ENCODE measurements at regions of chr3 and their contacts with region 1.

Region 1: DNA sequence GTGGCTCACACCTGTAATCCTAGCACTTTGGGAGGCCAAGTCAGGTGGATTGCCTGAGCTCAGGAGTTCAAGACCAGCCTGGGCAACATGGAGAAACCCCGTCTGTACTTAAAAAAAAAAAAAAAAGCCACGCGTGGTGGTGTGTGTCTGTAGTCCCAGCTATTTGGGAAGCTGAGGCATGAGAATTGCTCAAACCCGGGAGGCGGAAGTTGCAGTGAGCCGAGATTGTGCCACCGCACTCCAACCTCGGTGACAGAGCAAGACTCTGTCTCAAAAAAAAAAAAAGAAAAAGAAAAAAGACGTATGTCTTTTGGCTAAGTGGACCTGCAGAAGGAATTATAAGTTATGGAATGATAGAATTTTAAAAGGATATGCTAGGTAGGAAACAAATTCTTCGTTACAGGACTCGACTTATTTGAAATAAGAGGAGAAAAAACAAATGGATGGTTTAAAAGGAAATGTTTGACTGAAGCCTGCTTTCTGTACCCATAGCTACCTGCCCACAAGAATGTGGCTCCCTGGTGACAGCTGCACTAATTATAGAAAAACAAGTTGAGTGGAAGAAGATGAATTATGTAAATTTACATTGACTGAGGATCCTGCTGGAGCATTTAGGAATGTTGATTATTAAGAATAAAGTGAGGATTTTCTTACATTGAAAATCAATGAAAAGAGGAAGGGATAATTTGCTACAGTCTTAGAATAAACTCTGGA is 36.0 kb upstream of the SKIL start:
- DNase-seq: peak; percentile 63 to 84
- H3K4me3 ChIP-seq: no peak overlapping the region
- H3K27ac ChIP-seq: peak overlapping the region; percentile 52
- H3K4me1 ChIP-seq: peaks cover 35% of the 10 kb centered on the region
- H3K27me3 ChIP-seq: no peaks in the 10 kb centered on the region
- CTCF ChIP-seq: no peak

Region 2: GRCh38 chr3:170012683-170013384 is 308.6 kb before region 1 on chr3:
- CTCF ChIA-PET with region 1: no interaction called
- POLR2A ChIA-PET with region 1: no interaction called
- intact Hi-C with region 1: no loop called
- DNase-seq: no peak
- H3K4me3 ChIP-seq: no peak overlapping the region
- H3K27ac ChIP-seq: no peak overlapping the region
- H3K4me1 ChIP-seq: no peaks in the 10 kb centered on the region
- H3K27me3 ChIP-seq: no peaks in the 10 kb centered on the region
- CTCF ChIP-seq: no peak

Region 3: DNA sequence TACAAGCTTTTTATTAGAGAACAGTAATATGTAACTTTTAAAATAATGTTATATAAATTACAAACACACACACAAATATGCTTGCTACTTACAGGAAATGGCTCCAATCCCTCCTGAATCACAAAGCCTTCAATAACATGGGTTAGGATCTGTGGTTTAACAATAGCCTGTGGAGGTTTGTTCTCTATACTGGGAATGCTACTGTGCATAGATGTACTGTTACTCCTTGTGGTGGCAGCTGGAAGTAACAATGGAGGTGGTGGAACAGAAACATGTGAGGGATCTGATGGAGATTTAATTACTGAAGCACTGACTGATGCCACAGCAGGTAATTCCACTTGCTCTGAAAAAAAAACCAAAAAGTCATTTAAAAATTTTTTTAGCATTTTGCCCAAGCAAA is 204.3 kb before region 1 on chr3:
- CTCF ChIA-PET with region 1: no interaction called
- POLR2A ChIA-PET with region 1: interaction called, 16 read pairs
- intact Hi-C with region 1: no loop called
- DNase-seq: no peak
- H3K4me3 ChIP-seq: no peak overlapping the region
- H3K27ac ChIP-seq: no peak overlapping the region
- H3K4me1 ChIP-seq: no peaks in the 10 kb centered on the region
- H3K27me3 ChIP-seq: no peaks in the 10 kb centered on the region
- CTCF ChIP-seq: peak; percentile 51

Region 4: DNA sequence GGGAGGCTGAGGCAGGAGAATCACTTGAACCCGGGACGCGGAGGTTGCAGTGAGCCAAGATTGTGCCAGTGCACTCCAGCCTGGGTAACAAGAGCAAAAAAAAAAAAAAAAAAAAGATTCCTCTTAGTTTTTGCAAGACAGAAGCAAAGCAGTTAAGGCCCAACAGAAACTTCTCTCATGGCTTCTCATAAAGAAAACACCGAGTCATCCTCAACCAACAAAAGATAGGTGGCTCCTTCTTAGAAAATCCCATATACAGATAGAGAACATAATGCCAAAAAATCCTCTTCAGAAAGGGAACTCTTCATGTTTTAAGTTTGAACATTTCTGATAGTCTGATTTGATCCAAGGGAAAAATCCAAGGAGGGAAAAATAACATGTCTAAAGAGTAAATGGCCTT is 23.5 kb after region 1 on chr3:
- CTCF ChIA-PET with region 1: no interaction called
- POLR2A ChIA-PET with region 1: interaction called, 3 read pairs
- intact Hi-C with region 1: loop called (anchors 2 kb)
- DNase-seq: no peak
- H3K4me3 ChIP-seq: no peak overlapping the region
- H3K27ac ChIP-seq: peak overlapping the region; percentile 62
- H3K4me1 ChIP-seq: peaks cover 35% of the 10 kb centered on the region
- H3K27me3 ChIP-seq: no peaks in the 10 kb centered on the region
- CTCF ChIP-seq: no peak

Measured in PC-9 (cell line).